ENCODE measurements at regions of chr4 and their contacts with region 1.

Region 1: GRCh38 chr4:80540785-80541469 is 205.4 kb downstream of the CFAP299 start:
- DNase-seq: no peak
- H3K4me3 Mint-ChIP-seq: no peak overlapping the region
- H3K27ac Mint-ChIP-seq: no peak overlapping the region
- H3K4me1 Mint-ChIP-seq: peaks cover 4% of the 10 kb centered on the region
- H3K27me3 Mint-ChIP-seq: peaks cover 36% of the 10 kb centered on the region

Region 2: DNA sequence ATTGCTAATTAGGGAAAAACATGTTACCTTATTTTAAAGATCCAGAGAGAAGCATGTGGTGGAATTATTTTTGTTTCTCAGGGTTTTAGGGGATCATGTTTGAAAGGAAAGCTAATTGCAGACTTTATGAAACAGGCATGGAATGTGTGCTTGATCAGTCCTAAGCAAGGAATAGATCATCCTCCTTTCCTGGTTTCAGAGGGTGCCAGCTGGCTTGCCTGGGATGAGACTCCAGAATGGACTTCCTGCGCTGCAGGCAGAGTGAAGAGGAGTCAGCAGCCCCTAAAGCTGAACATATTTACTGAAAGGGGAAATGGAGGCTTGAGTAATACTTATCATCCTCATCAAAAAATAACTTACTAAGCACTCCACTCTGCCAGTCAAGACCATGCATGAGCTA is 261.2 kb before region 1 on chr4:
- intact Hi-C with region 1: no loop called
- DNase-seq: no peak
- H3K4me3 Mint-ChIP-seq: no peak overlapping the region
- H3K27ac Mint-ChIP-seq: no peak overlapping the region
- H3K4me1 Mint-ChIP-seq: no peaks in the 10 kb centered on the region
- H3K27me3 Mint-ChIP-seq: peaks cover 20% of the 10 kb centered on the region

Region 3: DNA sequence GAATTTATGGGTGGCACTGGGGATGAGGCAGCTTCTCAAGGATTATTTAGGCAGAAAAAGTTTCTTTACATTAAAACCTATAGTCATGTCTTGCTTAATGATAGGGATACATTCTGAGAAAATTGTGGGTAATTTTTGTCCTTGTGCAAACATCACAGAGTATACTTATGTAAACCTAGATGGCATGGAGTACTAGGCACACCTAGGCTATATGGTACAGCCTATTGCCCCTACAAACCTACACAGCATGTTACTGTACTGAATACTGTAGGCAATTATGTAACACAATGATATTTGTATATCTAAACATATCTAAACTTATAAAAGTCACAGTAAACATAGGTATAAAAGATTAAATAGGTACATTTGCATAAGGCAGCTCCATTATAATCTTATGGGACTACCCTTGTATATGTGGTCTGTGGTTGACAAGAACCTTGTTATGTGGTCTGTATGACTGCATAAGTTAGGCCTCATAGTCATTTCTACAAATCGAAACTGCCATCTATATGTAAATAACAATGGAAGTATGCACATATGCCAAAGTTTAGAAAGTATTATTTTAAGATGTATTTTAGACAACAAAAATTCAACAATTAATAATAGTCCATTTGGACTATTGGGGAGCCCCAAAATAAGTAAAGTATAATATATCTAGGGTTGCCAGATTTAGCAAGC is 118.1 kb before region 1 on chr4:
- intact Hi-C with region 1: loop called (anchors 10 kb)
- DNase-seq: no peak
- H3K4me3 Mint-ChIP-seq: no peak overlapping the region
- H3K27ac Mint-ChIP-seq: no peak overlapping the region
- H3K4me1 Mint-ChIP-seq: peaks cover 2% of the 10 kb centered on the region
- H3K27me3 Mint-ChIP-seq: no peaks in the 10 kb centered on the region

Measured in activated CD4-positive, alpha-beta T cell treated with anti-CD3 and anti-CD28 coated beads, Interleukin-2, amount 10 ng/mL, durations not matched to agents 24 days and 14 days (primary cell).